AG04449 (cell line): ENCODE measurements at regions of chr12 and their contacts with region 1.

Region 1: GRCh38 chr12:54324617-54325441 is at the start of gene COPZ1:
- DNase-seq: peak; percentile 100
- H3K4me3 ChIP-seq: peak within 1 kb of the TSS; percentile 96
- CTCF ChIP-seq: peak; percentile 83

Region 2: DNA sequence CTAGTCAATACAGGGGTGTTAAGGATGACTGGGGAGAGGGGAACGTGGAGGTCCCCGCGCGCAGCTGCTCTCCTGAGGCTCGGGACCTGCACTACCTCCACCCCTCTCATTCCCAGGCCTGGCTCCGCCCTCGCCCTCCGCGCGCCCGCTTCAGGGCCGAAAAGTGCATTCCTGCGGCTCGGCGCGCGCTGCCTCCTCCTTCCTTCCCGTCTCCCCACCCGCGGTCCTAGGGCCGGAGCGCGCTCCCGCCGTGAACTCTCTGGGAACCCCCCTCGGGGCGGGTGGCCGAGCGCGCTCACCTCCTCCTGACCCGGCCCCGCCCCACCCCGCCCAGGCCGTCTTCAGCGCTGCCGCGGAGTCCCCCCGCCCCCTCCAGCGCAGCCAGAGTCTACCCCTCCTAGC is 1104.0 kb before region 1 on chr12:
- CTCF ChIA-PET with region 1: no interaction called
- POLR2A ChIA-PET with region 1: no interaction called
- DNase-seq: peak; percentile 28
- H3K4me3 ChIP-seq: peak overlapping the region; percentile 95
- CTCF ChIP-seq: no peak

Region 3: GRCh38 chr12:54229624-54230212 is 95.1 kb before region 1 on chr12:
- CTCF ChIA-PET with region 1: interaction called, 10 read pairs
- POLR2A ChIA-PET with region 1: no interaction called
- DNase-seq: peak; percentile 91
- H3K4me3 ChIP-seq: no peak overlapping the region
- CTCF ChIP-seq: no peak

Region 4: DNA sequence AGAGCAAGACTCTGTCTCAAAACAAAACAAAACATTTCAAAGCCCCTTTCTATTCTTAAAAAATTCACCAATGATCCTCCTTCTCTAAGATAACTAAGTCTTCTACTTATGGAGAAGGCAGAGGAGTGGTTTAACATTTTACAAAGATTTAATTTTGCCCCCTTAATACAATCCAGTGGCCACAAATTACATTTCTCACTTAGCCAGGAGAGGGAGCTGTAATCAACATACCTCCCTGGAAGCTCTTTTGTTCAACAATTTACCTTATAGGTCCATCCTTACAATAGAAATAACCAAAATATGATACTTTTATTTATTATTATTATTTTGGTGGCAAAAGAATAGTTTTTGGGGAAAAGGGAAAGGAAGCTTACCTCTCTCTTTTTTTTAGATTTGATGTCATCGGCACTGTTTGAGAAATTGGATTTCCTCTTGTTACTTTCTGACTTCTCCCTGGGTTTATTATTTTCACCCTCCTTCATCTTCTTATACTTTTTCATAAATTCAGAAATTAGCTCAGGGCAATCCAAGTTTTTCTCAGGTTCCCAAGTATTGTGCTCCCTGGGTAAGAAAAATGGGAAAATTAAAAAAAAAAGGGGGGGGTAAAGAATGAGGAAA is 73.1 kb before region 1 on chr12:
- CTCF ChIA-PET with region 1: interaction called, 27 read pairs
- POLR2A ChIA-PET with region 1: no interaction called
- DNase-seq: no peak
- H3K4me3 ChIP-seq: no peak overlapping the region
- CTCF ChIP-seq: peak; percentile 42

Region 5: GRCh38 chr12:54279866-54280467 is 44.9 kb before region 1 on chr12 and contains the start of gene CBX5:
- CTCF ChIA-PET with region 1: interaction called, 6 read pairs
- POLR2A ChIA-PET with region 1: interaction called, 10 read pairs
- DNase-seq: peak; percentile 83
- H3K4me3 ChIP-seq: peak within 1 kb of the TSS; percentile 92
- CTCF ChIP-seq: no peak

Region 6: DNA sequence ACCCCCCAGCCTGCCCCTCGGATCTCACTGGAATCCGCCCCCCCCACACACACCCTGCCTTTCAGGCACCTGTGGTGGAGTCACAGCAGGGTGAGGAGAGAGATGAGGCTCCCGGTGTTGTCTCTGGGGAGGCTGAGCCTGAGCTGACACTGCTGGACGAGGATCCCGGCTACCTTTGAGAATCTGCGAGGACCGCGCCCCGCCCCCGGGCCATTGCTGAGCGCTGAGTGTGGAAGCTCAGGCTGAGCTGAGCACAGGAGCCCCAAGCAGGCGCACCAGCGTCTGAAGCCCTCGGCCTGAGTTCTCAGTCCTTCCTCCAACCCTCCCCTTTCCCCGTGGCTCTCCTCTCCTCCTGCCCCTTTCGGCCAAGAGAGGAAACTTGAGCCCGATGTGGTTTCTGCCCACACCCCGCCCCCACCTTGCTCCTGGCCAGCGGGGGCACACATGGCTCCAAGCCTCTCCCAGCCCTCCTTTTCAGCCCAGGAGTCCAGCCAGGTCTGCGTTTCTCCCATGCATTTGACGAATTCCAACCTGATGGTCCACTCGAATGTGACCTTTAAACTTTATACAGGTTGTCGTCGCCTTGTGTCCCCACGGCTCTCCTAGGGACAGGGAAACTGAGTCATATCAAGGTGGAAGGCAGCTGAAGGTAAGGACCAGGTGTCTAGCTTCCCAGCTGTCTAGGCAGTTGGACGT is 23.9 kb before region 1 on chr12 and contains the start of gene NFE2:
- CTCF ChIA-PET with region 1: interaction called, 52 read pairs
- POLR2A ChIA-PET with region 1: interaction called, 3 read pairs
- DNase-seq: no peak
- H3K4me3 ChIP-seq: peak within 1 kb of the TSS; percentile 49
- CTCF ChIP-seq: peak; percentile 23

Region 7: DNA sequence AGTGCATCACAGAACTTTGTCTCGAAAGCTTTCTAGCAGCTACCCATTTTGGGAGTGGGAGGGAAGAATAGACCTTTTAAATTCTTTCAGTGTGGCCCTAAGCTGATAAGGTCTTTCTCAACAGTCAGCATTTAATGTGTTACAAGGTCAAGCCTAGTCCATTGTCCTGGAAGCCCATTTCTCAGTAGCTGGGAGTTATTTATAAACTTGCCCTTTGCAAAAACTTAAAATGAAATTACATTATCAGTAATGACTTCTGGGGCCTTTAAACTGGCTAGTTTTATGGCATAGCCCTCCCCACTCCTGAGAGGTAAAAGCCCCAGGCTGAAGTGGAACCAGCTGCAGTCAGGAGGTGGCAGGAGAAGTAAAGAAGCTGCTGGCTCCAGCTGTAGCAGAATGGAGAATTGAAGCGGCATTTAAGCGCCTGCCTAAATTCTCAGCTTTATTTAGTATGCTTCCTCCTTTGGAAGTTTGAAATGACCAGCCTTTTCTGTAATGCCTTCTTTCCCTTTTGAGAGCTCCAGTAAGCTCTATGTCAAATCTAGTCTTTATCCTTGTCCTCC is 12.5 kb after region 1 on chr12:
- CTCF ChIA-PET with region 1: interaction called, 91 read pairs
- POLR2A ChIA-PET with region 1: interaction called, 3 read pairs
- DNase-seq: no peak
- H3K4me3 ChIP-seq: no peak overlapping the region
- CTCF ChIP-seq: no peak